PC-9 (cell line): ENCODE measurements at regions of chr14 and their contacts with region 1.

Region 1: GRCh38 chr14:75030147-75030546 is 21.1 kb downstream of the MLH3 start:
- DNase-seq: no peak
- H3K4me3 ChIP-seq: no peak overlapping the region
- H3K27ac ChIP-seq: no peak overlapping the region
- H3K4me1 ChIP-seq: no peaks in the 10 kb centered on the region
- H3K27me3 ChIP-seq: no peaks in the 10 kb centered on the region
- CTCF ChIP-seq: no peak

Region 2: GRCh38 chr14:76235628-76236027 is 1205.5 kb after region 1 on chr14:
- CTCF ChIA-PET with region 1: no interaction called
- POLR2A ChIA-PET with region 1: interaction called, 12 read pairs
- intact Hi-C with region 1: no loop called
- DNase-seq: no peak
- H3K4me3 ChIP-seq: no peak overlapping the region
- H3K27ac ChIP-seq: no peak overlapping the region
- H3K4me1 ChIP-seq: no peaks in the 10 kb centered on the region
- H3K27me3 ChIP-seq: peaks cover 36% of the 10 kb centered on the region; the same call in 1 of the 2 replicates
- CTCF ChIP-seq: no peak